Activated CD8-positive, alpha-beta T cell treated with anti-CD3 and anti-CD28 coated beads for 36 hours (primary cell): ENCODE measurements at regions of chr1 and their contacts with region 1.

Region 1: GRCh38 chr1:150979092-150980056 is 2.7 kb upstream of the ANXA9 start:
- DNase-seq: peak; percentile 96
- ATAC-seq: peak; percentile 60
- H3K4me3 Mint-ChIP-seq: peak overlapping the region; percentile 61
- H3K27ac Mint-ChIP-seq: peak overlapping the region; percentile 47
- H3K4me1 Mint-ChIP-seq: peaks cover 34% of the 10 kb centered on the region
- H3K27me3 Mint-ChIP-seq: no peaks in the 10 kb centered on the region
- CTCF ChIP-seq: peak; percentile 100

Region 2: GRCh38 chr1:150642296-150642695 is 337.1 kb before region 1 on chr1:
- CTCF ChIA-PET with region 1: no interaction called
- POLR2A ChIA-PET with region 1: no interaction called
- intact Hi-C with region 1: no loop called
- DNase-seq: no peak
- ATAC-seq: no peak
- H3K4me3 Mint-ChIP-seq: no peak overlapping the region
- H3K27ac Mint-ChIP-seq: no peak overlapping the region
- H3K4me1 Mint-ChIP-seq: no peaks in the 10 kb centered on the region
- H3K27me3 Mint-ChIP-seq: no peaks in the 10 kb centered on the region
- CTCF ChIP-seq: no peak

Region 3: GRCh38 chr1:150961799-150962198 is 17.6 kb before region 1 on chr1:
- CTCF ChIA-PET with region 1: interaction called, 8 read pairs
- POLR2A ChIA-PET with region 1: interaction called, 10 read pairs
- intact Hi-C with region 1: no loop called
- DNase-seq: no peak
- ATAC-seq: no peak
- H3K4me3 Mint-ChIP-seq: no peak overlapping the region
- H3K27ac Mint-ChIP-seq: peak overlapping the region; percentile 64
- H3K4me1 Mint-ChIP-seq: peaks cover 2% of the 10 kb centered on the region
- H3K27me3 Mint-ChIP-seq: no peaks in the 10 kb centered on the region
- CTCF ChIP-seq: no peak

Region 4: GRCh38 chr1:150995896-150996295 is 16.5 kb after region 1 on chr1:
- CTCF ChIA-PET with region 1: interaction called, 103 read pairs
- POLR2A ChIA-PET with region 1: interaction called, 4 read pairs
- intact Hi-C with region 1: no loop called
- DNase-seq: peak; percentile 29
- ATAC-seq: peak; percentile 36
- H3K4me3 Mint-ChIP-seq: no peak overlapping the region
- H3K27ac Mint-ChIP-seq: no peak overlapping the region
- H3K4me1 Mint-ChIP-seq: peaks cover 11% of the 10 kb centered on the region
- H3K27me3 Mint-ChIP-seq: no peaks in the 10 kb centered on the region
- CTCF ChIP-seq: peak; percentile 96

Region 5: GRCh38 chr1:151001602-151002001 is 22.2 kb after region 1 on chr1:
- CTCF ChIA-PET with region 1: interaction called, 103 read pairs
- POLR2A ChIA-PET with region 1: interaction called, 10 read pairs
- intact Hi-C with region 1: no loop called
- DNase-seq: no peak
- ATAC-seq: no peak
- H3K4me3 Mint-ChIP-seq: no peak overlapping the region
- H3K27ac Mint-ChIP-seq: no peak overlapping the region
- H3K4me1 Mint-ChIP-seq: peaks cover 56% of the 10 kb centered on the region
- H3K27me3 Mint-ChIP-seq: no peaks in the 10 kb centered on the region
- CTCF ChIP-seq: no peak

Region 6: DNA sequence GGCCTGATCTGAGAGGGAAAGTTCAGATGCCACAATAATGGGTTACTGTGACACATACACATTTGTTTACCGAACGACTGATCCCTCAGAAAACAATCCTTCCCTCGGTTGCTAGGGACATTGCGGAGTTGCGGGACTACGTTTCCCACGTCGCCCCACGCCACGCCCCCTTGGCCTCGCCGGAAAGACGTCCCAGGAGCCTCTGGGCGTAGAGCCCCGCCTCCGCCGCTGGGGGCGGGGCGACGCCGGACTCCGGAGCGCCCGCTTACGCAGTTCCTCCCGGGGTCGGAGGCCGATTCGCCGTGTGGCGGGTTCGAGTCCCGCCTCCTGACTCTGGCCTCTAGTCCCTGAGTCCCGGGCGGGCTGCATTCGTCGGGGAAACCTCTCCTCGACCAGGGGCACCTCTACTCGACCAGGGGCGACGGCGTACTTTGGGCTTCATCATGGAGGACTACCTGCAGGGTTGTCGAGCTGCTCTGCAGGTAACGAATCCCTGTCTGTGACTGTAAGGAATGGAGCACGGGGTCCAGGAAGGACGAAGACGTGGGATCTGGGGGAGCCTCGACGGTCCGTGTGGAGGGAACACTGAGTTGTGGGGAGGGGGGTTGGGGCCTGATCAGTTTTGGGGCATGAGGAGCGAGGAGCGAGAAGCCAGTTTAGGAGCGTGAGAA is 29.0 kb after region 1 on chr1 and contains the start of gene PRUNE1:
- CTCF ChIA-PET with region 1: interaction called, 7 read pairs
- POLR2A ChIA-PET with region 1: interaction called, 10 read pairs
- intact Hi-C with region 1: no loop called
- DNase-seq: peak; percentile 98
- ATAC-seq: peak; percentile 90
- H3K4me3 Mint-ChIP-seq: peak within 1 kb of the TSS; percentile 98
- H3K27ac Mint-ChIP-seq: peak within 1 kb of the TSS; percentile 98
- H3K4me1 Mint-ChIP-seq: peaks cover 72% of the 10 kb centered on the region
- H3K27me3 Mint-ChIP-seq: no peaks in the 10 kb centered on the region
- CTCF ChIP-seq: no peak
- total RNA-seq, gene PRUNE1: 12.4 to 15.7 TPM

Region 7: GRCh38 chr1:151085953-151086559 is 106.7 kb after region 1 on chr1:
- CTCF ChIA-PET with region 1: no interaction called
- POLR2A ChIA-PET with region 1: no interaction called
- intact Hi-C with region 1: no loop called
- DNase-seq: no peak
- ATAC-seq: no peak
- H3K4me3 Mint-ChIP-seq: no peak overlapping the region
- H3K27ac Mint-ChIP-seq: no peak overlapping the region
- H3K4me1 Mint-ChIP-seq: no peaks in the 10 kb centered on the region
- H3K27me3 Mint-ChIP-seq: no peaks in the 10 kb centered on the region
- CTCF ChIP-seq: no peak